Esophagus squamous epithelium (tissue), 5 donors: ENCODE measurements at regions of chr14 and their contacts with region 1.

Region 1: DNA sequence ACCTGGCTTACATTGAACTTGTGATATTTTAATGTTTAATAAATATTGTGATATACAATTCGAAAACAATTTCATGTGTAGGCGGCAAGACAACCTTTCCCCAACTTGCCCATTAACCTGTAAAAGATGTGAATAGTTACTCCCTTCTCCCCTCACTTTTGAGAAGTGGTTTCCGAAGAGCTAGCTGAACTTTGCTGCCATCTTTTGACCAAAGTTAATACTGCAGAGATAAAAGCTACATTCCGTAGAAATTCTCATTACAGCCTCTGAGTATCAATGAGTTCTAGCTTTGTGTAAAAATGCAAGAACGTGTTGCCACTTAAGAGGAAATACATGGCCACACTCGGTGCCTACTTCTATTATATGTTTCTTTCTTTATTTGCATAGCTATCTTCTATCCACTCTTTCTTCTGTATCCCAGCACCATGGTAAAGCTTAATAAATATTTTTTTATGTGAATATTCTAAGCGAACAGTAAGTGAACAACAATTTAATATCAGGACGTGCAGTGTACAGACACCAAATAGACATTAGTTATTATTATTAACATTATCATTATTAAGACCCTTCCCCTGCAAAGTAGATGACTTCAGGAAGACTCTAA is 105.1 kb upstream of the TMEM260 start:
- DNase-seq: no peak
- H3K4me3 ChIP-seq: no peak overlapping the region
- H3K27ac ChIP-seq: no peak overlapping the region
- H3K4me1 ChIP-seq: no peaks in the 10 kb centered on the region
- H3K27me3 ChIP-seq: no peaks in the 10 kb centered on the region
- CTCF ChIP-seq: peak; percentile 47 to 85 (median 69)
- POLR2A ChIP-seq: no peak

Region 2: GRCh38 chr14:55446218-55446654 is 1028.3 kb before region 1 on chr14:
- intact Hi-C with region 1: loop called (anchors 10 kb)
- DNase-seq: no peak
- H3K4me3 ChIP-seq: no peak overlapping the region
- H3K27ac ChIP-seq: no peak overlapping the region
- H3K4me1 ChIP-seq: peaks cover 6 to 52% (median 24%) of the 10 kb centered on the region in 3 donors
- H3K27me3 ChIP-seq: peaks cover 0 to under 1% (median 0%) of the 10 kb centered on the region in 4 donors
- CTCF ChIP-seq: peak; percentile 30 to 72 (median 66)
- POLR2A ChIP-seq: no peak

Region 3: GRCh38 chr14:55707365-55707804 is 767.1 kb before region 1 on chr14:
- intact Hi-C with region 1: loop called (anchors 10 kb)
- DNase-seq: no peak
- H3K4me3 ChIP-seq: no peak overlapping the region
- H3K27ac ChIP-seq: no peak overlapping the region
- H3K4me1 ChIP-seq: peaks cover 0 to 26% (median 9%) of the 10 kb centered on the region in 3 donors
- H3K27me3 ChIP-seq: no peaks in the 10 kb centered on the region
- CTCF ChIP-seq: peak in 5 of 6 experiments; percentile 50 to 77 (median 56)
- POLR2A ChIP-seq: no peak

Region 4: DNA sequence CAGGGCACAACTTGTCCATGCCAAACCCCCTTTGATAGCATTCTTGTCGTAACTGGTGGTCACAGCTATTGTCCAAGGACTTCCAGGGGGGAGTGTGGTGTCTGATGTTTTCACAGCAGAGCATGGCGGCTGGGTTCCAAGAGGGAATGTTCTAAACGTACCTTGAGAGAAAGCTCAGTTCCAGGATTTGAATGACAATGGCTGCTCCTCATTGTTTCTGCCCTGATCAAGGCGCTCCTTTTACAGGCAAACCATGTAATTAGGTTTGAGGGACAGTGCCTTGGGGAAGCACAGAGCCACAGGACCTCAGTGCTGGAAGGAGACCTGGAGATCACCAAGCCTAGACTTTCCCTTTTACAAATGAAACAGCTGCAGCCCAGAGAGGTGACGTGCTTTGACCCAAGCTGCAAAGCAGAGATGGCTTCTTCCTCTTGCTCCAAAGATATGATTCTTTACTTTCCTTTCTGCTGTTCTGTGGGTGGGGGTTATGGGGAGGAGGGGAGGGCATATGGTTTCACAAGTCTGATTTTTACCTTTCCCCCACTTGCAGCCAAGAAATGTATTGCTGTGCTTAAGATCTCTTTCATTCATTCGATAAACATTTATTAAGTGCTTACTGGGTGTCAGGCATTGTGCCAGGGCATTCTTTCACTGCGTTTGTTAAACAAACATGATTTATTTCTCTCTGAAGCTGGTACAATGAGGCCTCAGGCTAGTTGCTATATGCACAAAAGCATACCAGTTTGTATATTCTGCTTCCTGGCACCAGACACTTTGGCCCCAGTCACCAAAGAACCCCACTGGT is 721.7 kb before region 1 on chr14:
- intact Hi-C with region 1: no loop called
- DNase-seq: no peak
- H3K4me3 ChIP-seq: no peak overlapping the region
- H3K27ac ChIP-seq: no peak overlapping the region
- H3K4me1 ChIP-seq: peaks cover 12 to 35% (median 19%) of the 10 kb centered on the region in 3 donors
- H3K27me3 ChIP-seq: no peaks in the 10 kb centered on the region
- CTCF ChIP-seq: no peak
- POLR2A ChIP-seq: no peak